Panc1 (cell line): ENCODE measurements at regions of chr11 and their contacts with region 1.

Region 1: DNA sequence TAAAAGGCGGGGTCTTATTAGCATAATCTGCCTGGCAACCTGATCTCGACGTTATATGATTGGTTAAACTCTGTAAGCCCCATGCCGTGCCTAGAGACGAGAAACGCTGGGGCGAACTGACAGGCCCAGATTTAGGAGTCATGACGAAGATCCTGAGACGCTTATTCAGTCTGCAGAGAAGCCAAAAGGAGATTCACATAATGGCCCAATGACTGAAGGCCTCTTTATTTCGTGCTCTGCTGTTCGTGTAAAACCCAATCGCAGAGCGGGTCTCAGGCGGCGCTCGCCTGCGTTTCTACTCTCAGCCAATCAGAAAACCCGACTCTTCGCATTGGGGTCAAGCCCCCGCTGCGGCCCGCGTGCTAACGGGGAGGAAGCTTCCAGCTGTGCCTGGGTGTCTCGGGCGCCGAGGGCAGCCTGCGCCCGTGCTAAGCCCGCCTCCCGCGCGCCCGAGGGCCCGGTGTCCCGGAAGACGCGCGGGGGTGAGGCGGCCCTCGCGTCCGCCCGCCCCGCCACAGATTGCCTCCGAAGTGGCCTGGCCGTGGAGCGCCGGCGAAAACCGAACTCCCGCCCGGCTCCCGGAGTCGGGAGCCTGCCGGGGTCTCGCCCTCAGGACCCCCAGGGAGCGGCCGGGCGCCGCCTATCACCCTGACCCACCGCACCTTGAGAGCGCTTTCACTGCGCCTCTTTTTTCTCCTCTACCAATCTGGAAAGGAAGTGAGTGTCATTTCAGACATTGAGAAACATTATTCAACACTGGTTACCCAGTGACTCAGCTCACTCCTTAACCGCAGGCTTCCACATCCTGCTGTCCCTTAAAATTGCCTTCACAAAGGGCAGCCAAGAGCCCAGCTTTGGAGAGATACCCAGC is 446 bp upstream of the PRDM10 start:
- DNase-seq: peak; percentile 97
- ATAC-seq: peak; percentile 88
- H3K4me3 ChIP-seq: peak overlapping the region; percentile 57 to 76
- H3K27ac ChIP-seq: peak overlapping the region; percentile 100
- H3K4me1 ChIP-seq: peaks cover 22% of the 10 kb centered on the region
- H3K27me3 ChIP-seq: no peaks in the 10 kb centered on the region
- CTCF ChIP-seq: no peak

Region 2: DNA sequence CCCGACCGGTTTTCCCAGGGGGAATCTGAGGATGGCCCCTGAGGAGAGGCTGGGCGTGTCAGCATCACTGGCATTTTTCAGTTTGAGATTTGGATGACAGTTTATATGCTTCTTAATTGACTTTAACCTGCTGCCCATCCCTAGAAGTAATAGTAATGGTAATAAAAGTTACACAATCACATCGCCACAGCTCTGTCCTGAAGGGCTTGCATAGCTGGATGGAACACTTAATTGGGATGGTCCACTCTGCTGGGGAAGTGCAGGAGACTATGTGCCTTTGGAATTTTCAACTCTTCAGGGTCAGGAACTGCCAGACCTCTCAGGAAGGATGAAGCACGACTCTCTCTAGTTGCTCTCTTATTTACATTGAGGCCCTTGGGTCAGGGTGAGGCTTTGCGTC is 611.3 kb before region 1 on chr11:
- CTCF ChIA-PET with region 1: no interaction called
- POLR2A ChIA-PET with region 1: interaction called, 18 read pairs
- in situ Hi-C with region 1: no loop called
- intact Hi-C with region 1: no loop called
- DNase-seq: no peak
- ATAC-seq: no peak
- H3K4me3 ChIP-seq: no peak overlapping the region
- H3K27ac ChIP-seq: no peak overlapping the region
- H3K4me1 ChIP-seq: peaks cover 7% of the 10 kb centered on the region
- H3K27me3 ChIP-seq: peaks cover 2% of the 10 kb centered on the region; the same call in 1 of the 2 replicates
- CTCF ChIP-seq: no peak

Region 3: DNA sequence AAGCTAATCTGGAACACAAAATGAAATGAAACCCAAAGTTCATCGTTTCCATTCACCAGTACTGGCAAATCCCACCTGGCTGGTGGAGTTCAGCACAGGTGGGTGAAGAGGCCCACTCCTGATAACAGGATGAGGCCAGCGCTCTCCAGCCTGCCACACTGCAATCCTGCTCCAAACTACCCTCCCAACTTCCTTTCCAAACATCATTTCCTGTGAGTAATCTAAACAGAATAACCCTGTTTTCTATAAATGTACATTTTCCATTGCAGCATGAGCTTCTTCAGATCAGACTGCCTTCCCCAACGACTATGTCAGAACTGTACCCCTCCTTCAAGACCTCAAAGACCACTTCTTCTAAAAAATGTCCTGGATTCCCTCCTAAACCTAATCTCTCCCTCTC is 91.8 kb before region 1 on chr11:
- CTCF ChIA-PET with region 1: no interaction called
- POLR2A ChIA-PET with region 1: interaction called, 14 read pairs
- in situ Hi-C with region 1: no loop called
- intact Hi-C with region 1: no loop called
- DNase-seq: no peak
- ATAC-seq: no peak
- H3K4me3 ChIP-seq: no peak overlapping the region
- H3K27ac ChIP-seq: no peak overlapping the region
- H3K4me1 ChIP-seq: no peaks in the 10 kb centered on the region
- H3K27me3 ChIP-seq: no peaks in the 10 kb centered on the region
- CTCF ChIP-seq: no peak

Region 4: DNA sequence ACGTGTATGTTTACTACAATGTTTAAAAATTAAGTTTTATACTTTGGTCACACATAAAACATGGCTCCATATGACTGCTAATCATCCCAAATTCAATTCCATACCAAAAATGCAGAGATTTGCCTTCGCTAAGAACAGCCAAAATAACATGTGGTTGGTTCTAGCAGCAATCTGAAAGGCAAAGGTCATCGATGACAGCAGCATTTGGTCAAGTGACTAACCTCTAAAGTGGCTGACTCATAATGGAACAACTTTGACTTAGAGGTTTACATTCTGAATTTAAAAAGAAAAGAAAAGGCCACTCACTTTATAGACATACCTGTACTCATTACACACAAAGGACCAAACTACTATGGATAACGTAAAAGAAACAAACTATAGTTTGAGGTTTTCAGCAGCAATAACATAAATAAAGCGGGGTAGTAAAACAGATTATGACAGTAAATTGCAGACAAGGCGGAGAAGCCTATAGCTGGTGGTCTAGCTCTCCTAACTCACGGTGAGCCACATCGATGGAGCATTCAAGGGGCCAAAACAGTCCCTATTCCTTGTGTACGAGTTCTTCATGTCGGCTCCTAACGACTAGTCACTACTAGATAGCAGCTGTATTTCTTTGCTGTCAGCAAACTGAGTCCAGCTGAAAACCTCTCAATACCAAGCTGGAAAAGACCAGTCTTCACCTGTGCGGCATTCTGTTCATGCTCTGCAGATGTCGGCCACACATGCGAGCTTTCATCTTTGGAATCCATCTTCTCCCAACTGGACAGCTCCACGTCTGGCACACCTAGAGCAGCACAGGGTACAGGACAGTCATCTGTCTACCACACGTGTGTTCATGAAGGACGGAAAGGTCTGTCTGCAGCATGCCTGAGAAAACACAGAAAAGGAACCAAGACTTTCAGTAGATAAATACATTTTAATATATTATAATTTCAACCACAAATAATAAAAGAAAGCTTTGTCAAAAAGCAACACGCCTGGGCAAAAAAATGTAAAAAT is 42.6 kb before region 1 on chr11:
- CTCF ChIA-PET with region 1: interaction called, 4 read pairs
- POLR2A ChIA-PET with region 1: interaction called, 15 read pairs
- in situ Hi-C with region 1: no loop called
- intact Hi-C with region 1: no loop called
- DNase-seq: peak; percentile 71
- ATAC-seq: peak; percentile 89
- H3K4me3 ChIP-seq: no peak overlapping the region
- H3K27ac ChIP-seq: no peak overlapping the region
- H3K4me1 ChIP-seq: peaks cover 8% of the 10 kb centered on the region
- H3K27me3 ChIP-seq: no peaks in the 10 kb centered on the region
- CTCF ChIP-seq: no peak

Region 5: DNA sequence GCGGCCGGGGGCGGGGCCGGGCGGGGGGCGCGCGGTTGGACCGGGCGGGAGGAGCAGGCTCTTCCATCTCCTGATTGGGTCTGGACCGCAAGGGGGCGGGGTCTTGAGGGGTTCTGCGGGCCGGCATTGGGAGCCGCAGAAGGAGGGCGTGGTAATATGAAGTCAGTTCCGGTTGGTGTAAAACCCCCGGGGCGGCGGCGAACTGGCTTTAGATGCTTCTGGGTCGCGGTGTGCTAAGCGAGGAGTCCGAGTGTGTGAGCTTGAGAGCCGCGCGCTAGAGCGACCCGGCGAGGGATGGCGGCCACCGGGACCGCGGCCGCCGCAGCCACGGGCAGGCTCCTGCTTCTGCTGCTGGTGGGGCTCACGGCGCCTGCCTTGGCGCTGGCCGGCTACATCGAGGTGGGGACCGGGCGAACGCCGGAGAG is 66.6 kb after region 1 on chr11 and contains the start of gene APLP2:
- CTCF ChIA-PET with region 1: interaction called, 13 read pairs
- POLR2A ChIA-PET with region 1: interaction called, 8 read pairs
- in situ Hi-C with region 1: no loop called
- intact Hi-C with region 1: loop called (anchors 2 kb)
- DNase-seq: peak; percentile 90
- ATAC-seq: peak; percentile 92
- H3K4me3 ChIP-seq: peak within 1 kb of the TSS; percentile 71 to 73
- H3K27ac ChIP-seq: peak within 1 kb of the TSS; percentile 90
- H3K4me1 ChIP-seq: peaks cover 18% of the 10 kb centered on the region; the same call in 1 of the 2 replicates
- H3K27me3 ChIP-seq: no peaks in the 10 kb centered on the region
- CTCF ChIP-seq: no peak
- total RNA-seq, gene APLP2: 589 TPM

Region 6: GRCh38 chr11:130118636-130119387 is 115.7 kb after region 1 on chr11:
- CTCF ChIA-PET with region 1: no interaction called
- POLR2A ChIA-PET with region 1: no interaction called
- in situ Hi-C with region 1: no loop called
- intact Hi-C with region 1: no loop called
- DNase-seq: no peak
- ATAC-seq: no peak; the same call in 1 of the 2 replicates
- H3K4me3 ChIP-seq: no peak overlapping the region
- H3K27ac ChIP-seq: no peak overlapping the region
- H3K4me1 ChIP-seq: peaks cover 13% of the 10 kb centered on the region
- H3K27me3 ChIP-seq: no peaks in the 10 kb centered on the region
- CTCF ChIP-seq: no peak

Region 7: GRCh38 chr11:130131961-130132850 is 129.1 kb after region 1 on chr11:
- CTCF ChIA-PET with region 1: interaction called, 14 read pairs
- POLR2A ChIA-PET with region 1: interaction called, 9 read pairs
- in situ Hi-C with region 1: no loop called
- intact Hi-C with region 1: no loop called
- DNase-seq: peak; percentile 72
- ATAC-seq: peak; percentile 85
- H3K4me3 ChIP-seq: no peak overlapping the region
- H3K27ac ChIP-seq: no peak overlapping the region
- H3K4me1 ChIP-seq: no peaks in the 10 kb centered on the region
- H3K27me3 ChIP-seq: no peaks in the 10 kb centered on the region
- CTCF ChIP-seq: peak; percentile 94

Region 8: GRCh38 chr11:130403271-130403804 is 400.3 kb after region 1 on chr11:
- CTCF ChIA-PET with region 1: no interaction called
- POLR2A ChIA-PET with region 1: no interaction called
- in situ Hi-C with region 1: no loop called
- intact Hi-C with region 1: no loop called
- DNase-seq: peak; percentile 25
- ATAC-seq: peak; percentile 69
- H3K4me3 ChIP-seq: no peak overlapping the region
- H3K27ac ChIP-seq: no peak overlapping the region
- H3K4me1 ChIP-seq: peaks cover 8% of the 10 kb centered on the region; the same call in 1 of the 2 replicates
- H3K27me3 ChIP-seq: 0 out of 2 replicates have a peak, but pooled peaks cover 5% of the 10 kb centered on the region
- CTCF ChIP-seq: no peak